ENCODE measurements at regions of chr7 and their contacts with region 1.

Region 1: DNA sequence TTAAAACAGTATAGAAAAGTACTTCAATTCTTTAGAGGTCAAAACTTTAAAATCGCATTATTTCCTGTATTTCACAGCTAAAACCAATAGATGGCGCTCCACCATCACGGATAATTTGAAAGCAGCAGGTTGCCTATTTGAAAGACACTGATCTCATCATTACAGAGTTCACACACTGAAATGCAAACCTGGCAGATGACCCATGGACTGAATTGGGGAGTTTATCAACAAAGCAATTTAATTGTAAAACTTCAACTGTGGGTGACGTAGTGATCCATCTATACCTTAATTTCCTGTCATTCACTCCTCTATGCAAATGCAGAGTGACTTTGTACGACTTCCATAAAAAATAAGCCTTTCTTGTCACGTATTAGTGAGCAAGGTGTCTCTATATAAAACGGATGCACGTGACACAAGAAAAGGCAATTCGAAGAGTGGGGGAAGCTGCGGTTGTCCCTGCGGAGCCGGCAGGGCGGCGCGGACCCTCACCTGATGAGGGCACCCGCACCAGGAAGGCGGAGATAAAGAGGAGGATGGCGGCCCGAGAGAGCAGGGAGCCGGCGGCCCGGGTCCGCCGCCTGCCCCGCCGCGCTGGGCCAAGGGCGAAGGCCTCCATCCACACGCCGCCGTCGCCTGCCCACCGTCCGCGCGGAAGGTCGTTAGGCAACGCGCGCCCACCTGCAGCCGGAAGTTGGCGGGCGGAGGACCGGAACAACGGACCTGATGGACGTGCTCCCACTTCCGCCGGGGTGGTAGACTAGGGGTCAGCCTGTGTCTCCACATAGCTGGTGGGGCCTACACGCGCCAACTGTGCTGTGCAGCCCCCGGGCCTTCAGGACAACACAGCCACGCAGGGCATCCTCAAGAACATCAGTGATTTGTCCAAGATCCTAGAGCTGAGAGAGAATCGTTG is at the start of gene ZPBP:
- DNase-seq: peak; percentile 76
- ATAC-seq: peak; percentile 81
- H3K4me3 Mint-ChIP-seq: peak within 1 kb of the TSS; percentile 84
- H3K27ac Mint-ChIP-seq: peak within 1 kb of the TSS; percentile 94
- H3K4me1 Mint-ChIP-seq: peaks cover 11% of the 10 kb centered on the region
- H3K27me3 Mint-ChIP-seq: no peaks in the 10 kb centered on the region
- total RNA-seq, gene ZPBP: not detected

Region 2: GRCh38 chr7:50112250-50112975 is 19.6 kb after region 1 on chr7:
- CTCF ChIA-PET with region 1: interaction called, 17 read pairs
- POLR2A ChIA-PET with region 1: no interaction called
- intact Hi-C with region 1: no loop called
- DNase-seq: no peak
- ATAC-seq: no peak
- H3K4me3 Mint-ChIP-seq: no peak overlapping the region
- H3K27ac Mint-ChIP-seq: no peak overlapping the region
- H3K4me1 Mint-ChIP-seq: no peaks in the 10 kb centered on the region
- H3K27me3 Mint-ChIP-seq: peaks cover 16% of the 10 kb centered on the region

Region 3: GRCh38 chr7:50181081-50181480 is 88.2 kb after region 1 on chr7:
- CTCF ChIA-PET with region 1: no interaction called
- POLR2A ChIA-PET with region 1: no interaction called
- intact Hi-C with region 1: no loop called
- DNase-seq: no peak
- ATAC-seq: no peak
- H3K4me3 Mint-ChIP-seq: no peak overlapping the region
- H3K27ac Mint-ChIP-seq: no peak overlapping the region
- H3K4me1 Mint-ChIP-seq: peaks cover 4% of the 10 kb centered on the region
- H3K27me3 Mint-ChIP-seq: no peaks in the 10 kb centered on the region

Region 4: DNA sequence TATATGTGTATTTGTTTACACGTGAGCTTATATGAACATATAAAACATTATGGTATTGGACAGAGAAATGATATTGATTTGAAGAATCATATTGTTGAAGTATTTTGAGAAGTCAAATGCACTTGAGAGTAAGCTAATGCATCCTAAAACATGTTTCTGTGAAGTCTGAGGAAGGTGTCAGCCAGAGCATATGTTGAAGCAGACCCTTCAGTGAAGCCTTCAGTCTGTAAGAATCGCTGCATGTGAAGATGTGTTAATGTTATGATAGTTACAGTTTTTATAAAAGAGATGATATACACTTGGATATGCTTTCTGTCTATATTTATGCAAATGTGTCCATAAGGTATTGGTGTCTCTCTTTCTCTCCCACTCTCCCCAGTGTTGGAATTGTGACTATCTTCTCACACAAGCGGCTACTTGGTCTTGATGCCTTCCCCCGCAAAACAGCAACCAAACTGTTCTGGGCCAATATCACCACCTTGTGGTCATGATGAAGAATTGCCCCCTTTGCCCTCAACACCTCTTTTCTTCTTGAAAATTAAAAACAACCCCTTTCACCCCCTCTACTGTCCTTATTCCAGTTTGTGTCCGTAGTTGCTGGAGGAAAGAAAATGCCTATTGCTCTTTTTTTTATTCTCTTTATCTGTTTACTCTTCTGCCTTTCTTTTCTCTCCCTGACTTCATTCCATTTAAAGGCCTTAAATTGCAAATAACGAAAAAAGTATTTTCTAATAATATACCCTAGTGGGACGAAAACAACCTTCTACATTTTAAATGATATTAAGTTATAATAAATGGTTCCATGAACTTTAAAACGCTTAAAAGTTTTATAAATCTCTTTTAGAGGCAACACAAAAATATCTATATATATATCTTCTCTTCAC is 276.6 kb after region 1 on chr7:
- CTCF ChIA-PET with region 1: interaction called, 19 read pairs
- POLR2A ChIA-PET with region 1: interaction called, 8 read pairs
- intact Hi-C with region 1: loop called in 1 of 2 experiments (anchors 2 kb)
- DNase-seq: peak; percentile 62
- ATAC-seq: no peak
- H3K4me3 Mint-ChIP-seq: peak overlapping the region; percentile 10
- H3K27ac Mint-ChIP-seq: peak overlapping the region; percentile 88
- H3K4me1 Mint-ChIP-seq: peaks cover 96% of the 10 kb centered on the region
- H3K27me3 Mint-ChIP-seq: no peaks in the 10 kb centered on the region

Region 5: DNA sequence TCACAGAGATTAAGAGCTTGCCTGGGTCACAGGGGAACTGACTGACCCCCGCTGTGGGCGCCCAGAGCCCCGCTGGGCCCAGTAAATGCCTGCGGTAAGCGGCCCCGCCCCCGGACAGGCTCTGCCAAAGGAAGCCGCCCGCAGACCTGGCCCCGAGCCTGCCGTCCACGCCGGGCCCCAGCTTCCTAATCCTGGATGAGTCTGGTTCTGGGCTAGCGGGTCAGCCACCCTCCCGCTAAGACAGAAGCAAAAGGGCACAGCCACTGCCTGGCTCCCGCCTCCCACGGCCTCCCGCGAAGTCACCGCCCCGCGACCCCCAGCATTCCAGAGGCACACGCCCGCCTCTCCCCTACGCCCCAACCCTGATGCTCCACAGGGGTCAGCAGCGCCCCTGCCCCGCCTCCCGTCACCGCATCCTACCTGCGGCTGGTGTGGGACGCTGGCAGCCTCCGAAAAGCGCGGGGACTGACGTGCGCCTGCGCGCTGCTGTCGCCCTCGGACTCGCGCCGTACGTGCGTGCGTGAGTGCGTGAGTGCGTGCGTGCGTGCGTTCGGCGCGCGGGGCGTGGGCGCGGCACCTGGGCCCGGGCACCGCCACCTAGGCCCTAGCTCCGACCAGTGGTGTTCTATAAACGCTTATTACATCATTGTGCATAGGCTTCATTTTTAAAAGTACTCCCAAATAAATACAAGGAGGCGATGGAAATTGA is 357.2 kb after region 1 on chr7 and contains the start of gene FIGNL1:
- CTCF ChIA-PET with region 1: interaction called, 7 read pairs
- POLR2A ChIA-PET with region 1: no interaction called
- intact Hi-C with region 1: loop called in 1 of 2 experiments (anchors 1 kb)
- DNase-seq: peak; percentile 92
- ATAC-seq: peak; percentile 87
- H3K4me3 Mint-ChIP-seq: peak within 1 kb of the TSS; percentile 70
- H3K27ac Mint-ChIP-seq: peak within 1 kb of the TSS; percentile 93
- H3K4me1 Mint-ChIP-seq: peaks cover 46% of the 10 kb centered on the region
- H3K27me3 Mint-ChIP-seq: no peaks in the 10 kb centered on the region
- total RNA-seq, gene FIGNL1: 46.9 to 49.3 TPM

Region 6: GRCh38 chr7:50632561-50633413 is 540.0 kb after region 1 on chr7:
- CTCF ChIA-PET with region 1: interaction called, 19 read pairs
- POLR2A ChIA-PET with region 1: no interaction called
- intact Hi-C with region 1: loop called (anchors 1 to 2 kb)
- DNase-seq: peak; percentile 72
- ATAC-seq: peak; percentile 84
- H3K4me3 Mint-ChIP-seq: no peak overlapping the region
- H3K27ac Mint-ChIP-seq: no peak overlapping the region
- H3K4me1 Mint-ChIP-seq: no peaks in the 10 kb centered on the region
- H3K27me3 Mint-ChIP-seq: peaks cover 12% of the 10 kb centered on the region

Region 7: GRCh38 chr7:51141451-51142003 is 1048.7 kb after region 1 on chr7:
- CTCF ChIA-PET with region 1: interaction called, 5 read pairs
- POLR2A ChIA-PET with region 1: no interaction called
- intact Hi-C with region 1: loop called in 1 of 2 experiments (anchors 2 kb)
- DNase-seq: peak; percentile 40
- ATAC-seq: peak; percentile 77
- H3K4me3 Mint-ChIP-seq: no peak overlapping the region
- H3K27ac Mint-ChIP-seq: no peak overlapping the region
- H3K4me1 Mint-ChIP-seq: peaks cover 23% of the 10 kb centered on the region
- H3K27me3 Mint-ChIP-seq: peaks cover 3% of the 10 kb centered on the region